Lower leg skin (tissue), 4 donors: ENCODE measurements at regions of chr11 and their contacts with region 1.

Region 1: DNA sequence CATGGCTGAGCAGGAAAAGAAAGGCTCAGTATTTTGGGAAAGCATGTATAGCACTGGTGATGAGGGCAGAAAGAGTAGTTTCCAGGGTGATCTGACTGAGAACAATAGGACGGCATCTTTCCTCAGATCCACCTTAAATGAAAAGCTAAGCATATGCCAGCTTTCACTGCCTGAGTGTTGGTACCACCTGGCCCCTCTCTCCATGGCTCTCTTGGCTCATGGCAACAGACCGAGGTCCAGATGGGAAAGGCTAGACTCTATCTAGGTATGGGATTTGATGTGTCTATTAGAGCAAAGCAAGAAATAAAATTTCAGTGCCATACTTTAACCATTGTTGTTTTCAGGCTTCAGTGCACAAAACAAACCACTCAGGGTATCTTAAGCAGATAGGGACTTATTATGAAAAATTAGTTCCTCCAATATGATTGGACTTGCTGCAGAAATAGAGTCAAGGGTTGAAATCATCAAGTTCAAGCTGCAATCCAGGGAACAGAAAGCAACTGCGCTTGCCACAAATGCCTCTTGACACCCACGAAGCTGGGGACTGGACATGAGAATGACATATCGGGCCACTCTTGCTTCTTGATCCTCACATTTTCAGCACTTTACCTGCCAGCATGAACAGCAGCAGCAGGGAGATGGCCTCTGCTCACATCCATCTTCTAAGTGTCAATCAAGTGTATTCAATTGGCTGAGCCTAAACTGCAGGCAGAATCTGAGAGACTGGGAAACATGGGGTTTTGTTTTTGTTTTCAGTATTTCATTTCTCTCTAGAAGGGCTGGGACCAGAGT is 64.0 kb upstream of the SNX19 start:
- DNase-seq: no peak
- H3K4me3 ChIP-seq: no peak overlapping the region
- CTCF ChIP-seq: no peak
- POLR2A ChIP-seq: no peak

Region 2: GRCh38 chr11:130924770-130925169 is 55.5 kb before region 1 on chr11:
- intact Hi-C with region 1: loop called (anchors 5 kb)
- DNase-seq: no peak
- H3K4me3 ChIP-seq: no peak overlapping the region
- CTCF ChIP-seq: no peak
- POLR2A ChIP-seq: no peak